Common myeloid progenitor, CD34-positive (primary cell): ENCODE measurements at regions of chr9 and their contacts with region 1.

Region 1: GRCh38 chr9:35790385-35791296 is 750 bp upstream of the NPR2 start:
- DNase-seq: peak; percentile 68 to 80 (median 72)
- H3K4me3 ChIP-seq: peak overlapping the region in 1 of 7 experiments; percentile 35
- H3K27ac ChIP-seq: no peak overlapping the region
- H3K4me1 ChIP-seq: peaks cover 0 to 18% (median 10%) of the 10 kb centered on the region in 4 experiments
- H3K27me3 ChIP-seq: peaks cover 0 to 3% (median 0%) of the 10 kb centered on the region in 5 experiments

Region 2: DNA sequence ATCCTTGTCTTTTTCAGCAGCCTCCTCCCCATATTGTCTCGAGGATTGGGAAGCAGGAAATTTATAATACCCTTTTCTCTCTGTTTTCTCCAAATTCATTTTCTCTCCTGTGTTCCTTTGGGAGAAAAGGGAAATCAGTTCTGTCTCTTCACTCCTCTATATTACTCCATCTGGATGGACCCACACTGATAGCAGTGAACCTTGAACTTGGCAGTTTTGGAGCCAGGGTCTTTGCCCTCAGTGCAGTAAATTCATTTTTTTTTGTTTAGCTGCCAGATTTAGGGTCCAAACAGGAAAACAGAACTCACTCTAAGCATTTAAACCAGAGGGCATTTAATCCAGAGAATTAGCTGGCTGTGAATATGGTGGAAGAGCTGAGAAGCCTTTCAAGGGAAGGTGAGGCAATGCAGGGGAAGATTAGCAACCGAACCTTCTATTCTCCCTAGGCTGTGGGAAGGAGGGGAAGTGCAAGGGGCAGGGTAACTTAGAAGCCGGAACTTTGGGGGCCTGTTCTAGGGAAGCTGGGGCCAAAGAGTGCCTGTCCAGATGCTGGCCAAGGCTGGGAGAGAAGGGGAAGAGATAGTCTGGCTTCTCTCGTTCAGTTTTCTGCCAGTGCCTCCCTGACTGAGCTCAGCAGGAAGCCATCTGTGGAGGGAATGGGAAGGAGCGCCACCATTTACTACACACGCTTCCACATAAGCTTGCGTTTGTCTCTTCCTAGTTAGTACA is 15.6 kb before region 1 on chr9:
- CTCF ChIA-PET with region 1: interaction called, 20 read pairs
- POLR2A ChIA-PET with region 1: no interaction called
- DNase-seq: peak in 1 of 3 donors; percentile 26
- H3K4me3 ChIP-seq: peak overlapping the region in 5 of 7 experiments; percentile 19 to 61 (median 51)
- H3K27ac ChIP-seq: peak overlapping the region; percentile 23 to 77
- H3K4me1 ChIP-seq: peaks cover 13 to 35% (median 17%) of the 10 kb centered on the region in 4 experiments
- H3K27me3 ChIP-seq: no peaks in the 10 kb centered on the region

Region 3: DNA sequence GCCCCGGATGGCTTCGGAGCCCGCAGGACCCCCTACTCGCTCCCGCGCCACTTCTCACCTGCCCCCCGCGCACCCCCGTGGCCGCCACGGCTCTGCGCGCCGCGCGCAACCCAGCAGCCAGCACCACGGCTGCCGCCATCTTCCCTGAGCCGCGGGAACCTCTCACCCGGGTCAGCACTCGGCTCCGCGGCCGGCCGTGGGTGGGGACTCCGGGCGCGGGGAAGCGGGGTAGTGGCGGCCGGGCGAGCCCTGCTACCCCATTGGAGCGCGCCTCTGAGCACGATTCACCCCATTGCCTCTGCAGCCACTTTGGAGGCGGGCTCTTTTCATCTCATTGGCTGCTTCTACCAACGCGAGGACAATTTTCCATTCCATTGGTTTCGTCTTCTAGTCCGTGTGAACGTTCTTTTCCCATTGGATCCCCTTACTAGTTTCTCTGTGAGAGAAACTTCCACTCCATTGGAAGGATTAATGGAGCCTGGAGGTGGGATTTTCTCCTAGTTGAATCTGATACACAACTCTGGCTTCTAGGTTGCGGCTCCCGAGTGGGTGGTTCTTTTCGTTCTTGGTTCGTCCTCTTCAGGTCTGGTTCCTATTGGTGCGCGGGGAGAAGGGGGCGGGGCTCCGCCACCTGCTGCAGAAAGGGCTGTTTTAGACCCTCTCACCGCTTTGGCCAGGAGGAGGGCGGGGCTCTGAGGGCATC is 24.4 kb after region 1 on chr9 and contains the start of gene HINT2:
- CTCF ChIA-PET with region 1: interaction called, 56 read pairs
- POLR2A ChIA-PET with region 1: no interaction called
- DNase-seq: peak; percentile 99
- H3K4me3 ChIP-seq: peak within 1 kb of the TSS; percentile 79 to 95 (median 84)
- H3K27ac ChIP-seq: peak within 1 kb of the TSS; percentile 48 to 83
- H3K4me1 ChIP-seq: peaks cover 17 to 42% (median 33%) of the 10 kb centered on the region in 4 experiments
- H3K27me3 ChIP-seq: no peaks in the 10 kb centered on the region

Region 4: DNA sequence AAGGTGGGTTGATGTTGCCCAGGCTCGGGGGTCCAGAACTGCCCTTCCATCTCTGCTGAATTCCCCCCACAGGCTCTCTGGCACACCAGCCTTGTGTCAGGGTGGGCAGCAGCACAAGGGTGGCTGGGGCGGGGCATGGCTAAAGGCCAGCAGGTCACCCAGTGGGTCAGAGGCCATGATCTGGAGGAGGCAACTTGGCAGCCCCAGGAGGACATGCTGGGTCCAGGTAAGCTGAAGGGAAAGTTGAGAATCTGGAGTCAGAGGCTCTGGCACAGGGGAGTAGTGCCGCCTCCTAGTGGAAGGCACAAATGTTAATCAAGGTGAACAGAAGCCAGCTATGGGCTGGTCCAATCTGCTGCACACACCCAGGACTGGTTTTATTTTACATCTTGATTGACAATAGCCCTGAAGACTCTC is 44.6 kb after region 1 on chr9:
- CTCF ChIA-PET with region 1: interaction called, 28 read pairs
- POLR2A ChIA-PET with region 1: no interaction called
- DNase-seq: peak in 1 of 3 donors; percentile 28
- H3K4me3 ChIP-seq: no peak overlapping the region
- H3K27ac ChIP-seq: no peak overlapping the region
- H3K4me1 ChIP-seq: peaks cover 4 to 25% (median 15%) of the 10 kb centered on the region in 4 experiments
- H3K27me3 ChIP-seq: peaks cover 0 to 46% (median 20%) of the 10 kb centered on the region in 5 experiments

Region 5: DNA sequence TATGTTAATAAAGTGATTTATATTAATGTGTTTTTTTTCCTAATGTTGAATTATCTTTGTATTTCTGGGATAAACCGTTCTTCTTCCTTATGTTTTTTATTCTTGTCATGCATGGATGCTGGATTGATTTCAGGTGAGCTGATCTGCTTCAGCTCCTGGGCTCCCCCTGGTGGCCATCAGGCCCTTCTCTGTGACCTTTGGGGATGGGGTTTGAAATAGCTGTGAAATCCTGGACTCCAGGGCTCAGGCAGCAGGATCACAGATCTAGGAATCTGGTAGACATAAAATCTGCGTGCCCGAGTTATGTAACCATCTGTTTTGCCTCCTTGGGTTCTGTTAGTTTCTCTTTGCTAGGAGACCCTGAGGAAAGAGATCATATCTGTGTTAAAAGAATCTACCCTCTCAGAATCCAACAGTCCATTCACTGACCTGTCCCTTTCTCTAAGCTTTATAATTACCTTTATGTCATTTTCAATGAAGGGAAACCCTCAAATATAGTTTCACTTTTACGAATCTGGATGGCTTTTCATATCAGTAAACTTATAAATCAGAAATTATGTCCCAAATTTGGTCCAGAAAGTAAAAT is 91.7 kb after region 1 on chr9:
- CTCF ChIA-PET with region 1: interaction called, 42 read pairs
- POLR2A ChIA-PET with region 1: no interaction called
- DNase-seq: peak; percentile 55 to 67 (median 58)
- H3K4me3 ChIP-seq: no peak overlapping the region
- H3K27ac ChIP-seq: no peak overlapping the region
- H3K4me1 ChIP-seq: no peaks in the 10 kb centered on the region
- H3K27me3 ChIP-seq: peaks cover 0 to 3% (median 0%) of the 10 kb centered on the region in 5 experiments

Region 6: DNA sequence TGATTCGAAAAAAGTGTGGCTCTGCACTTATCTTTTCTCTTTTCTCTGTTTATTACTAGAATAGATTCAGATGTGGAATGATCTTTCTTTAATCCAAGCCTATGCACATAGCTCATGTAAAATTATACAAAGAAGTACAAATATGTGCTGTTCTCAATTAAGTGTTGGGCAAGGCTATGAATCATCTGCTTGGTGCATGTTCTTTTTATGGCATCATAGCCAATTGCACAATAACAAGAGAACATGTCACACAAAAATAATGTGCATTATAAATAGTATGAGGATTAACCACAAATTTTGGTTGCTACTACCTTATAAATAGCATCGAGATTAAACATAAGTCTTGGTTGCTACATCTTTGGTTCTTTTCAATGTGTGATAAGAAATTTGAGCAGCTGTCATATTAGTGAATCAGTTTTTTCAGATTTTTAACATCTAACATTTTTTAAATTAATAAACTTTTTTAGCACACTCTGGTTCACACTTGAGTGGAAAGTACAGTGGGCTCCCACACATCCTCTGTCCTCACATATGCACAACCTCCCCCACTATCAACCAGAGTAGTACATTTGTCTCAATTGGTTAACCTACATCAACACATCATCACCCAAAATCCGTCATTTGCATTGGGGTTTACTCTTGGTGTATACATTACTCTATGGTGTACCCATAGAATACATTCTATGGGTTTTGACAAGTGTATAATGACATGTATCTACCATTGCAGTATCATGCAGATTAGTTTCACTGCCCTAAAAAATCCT is 239.3 kb after region 1 on chr9:
- CTCF ChIA-PET with region 1: no interaction called
- POLR2A ChIA-PET with region 1: no interaction called
- DNase-seq: peak in 2 of 3 donors; percentile 40 to 52
- H3K4me3 ChIP-seq: no peak overlapping the region
- H3K27ac ChIP-seq: no peak overlapping the region
- H3K4me1 ChIP-seq: peaks cover 0 to 9% (median 0%) of the 10 kb centered on the region in 4 experiments
- H3K27me3 ChIP-seq: no peaks in the 10 kb centered on the region